Caco-2 (cell line): ENCODE measurements at regions of chr11 and their contacts with region 1.

Region 1: DNA sequence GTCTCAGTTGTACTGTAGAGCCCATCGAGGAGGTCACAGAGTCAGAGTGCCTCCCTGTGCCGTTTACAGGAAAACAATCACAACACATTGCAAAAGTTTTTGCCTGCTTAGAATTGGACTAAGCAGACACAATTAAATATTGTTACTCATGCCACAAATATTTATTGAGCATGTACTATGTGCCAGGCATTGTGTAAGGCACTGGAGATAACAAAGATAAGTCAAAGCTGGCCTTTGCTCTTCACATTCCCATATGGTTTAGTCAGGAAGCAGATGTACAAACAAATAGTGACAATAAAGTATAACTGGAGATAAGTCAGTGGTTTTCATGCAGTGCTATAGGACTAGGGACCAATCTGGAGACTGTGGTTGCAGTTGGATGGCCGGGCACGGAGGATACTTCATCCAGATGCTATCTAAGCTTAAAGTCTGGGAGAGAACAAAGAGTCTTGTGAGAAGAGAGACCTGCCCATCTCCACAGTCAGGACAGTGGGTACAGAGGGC is 550.7 kb downstream of the INSC start:
- DNase-seq: peak; percentile 44
- H3K4me3 ChIP-seq: no peak overlapping the region
- H3K4me3 Mint-ChIP-seq: no peak overlapping the region
- H3K27ac Mint-ChIP-seq: peak overlapping the region; percentile 63
- H3K4me1 ChIP-seq: peaks cover 35% of the 10 kb centered on the region
- H3K4me1 Mint-ChIP-seq: peaks cover 45% of the 10 kb centered on the region
- H3K27me3 ChIP-seq: no peaks in the 10 kb centered on the region
- H3K27me3 Mint-ChIP-seq: no peaks in the 10 kb centered on the region
- CTCF ChIP-seq: no peak

Region 2: GRCh38 chr11:15695096-15695845 is 29.9 kb after region 1 on chr11:
- CTCF ChIA-PET with region 1: no interaction called
- POLR2A ChIA-PET with region 1: no interaction called
- intact Hi-C with region 1: loop called (anchors 1 kb)
- DNase-seq: peak; percentile 56 to 58
- H3K4me3 ChIP-seq: no peak overlapping the region
- H3K4me3 Mint-ChIP-seq: peak overlapping the region; percentile 3
- H3K27ac Mint-ChIP-seq: peak overlapping the region; percentile 27
- H3K4me1 ChIP-seq: peaks cover 26% of the 10 kb centered on the region
- H3K4me1 Mint-ChIP-seq: peaks cover 31% of the 10 kb centered on the region
- H3K27me3 ChIP-seq: no peaks in the 10 kb centered on the region
- H3K27me3 Mint-ChIP-seq: no peaks in the 10 kb centered on the region
- CTCF ChIP-seq: no peak

Region 3: DNA sequence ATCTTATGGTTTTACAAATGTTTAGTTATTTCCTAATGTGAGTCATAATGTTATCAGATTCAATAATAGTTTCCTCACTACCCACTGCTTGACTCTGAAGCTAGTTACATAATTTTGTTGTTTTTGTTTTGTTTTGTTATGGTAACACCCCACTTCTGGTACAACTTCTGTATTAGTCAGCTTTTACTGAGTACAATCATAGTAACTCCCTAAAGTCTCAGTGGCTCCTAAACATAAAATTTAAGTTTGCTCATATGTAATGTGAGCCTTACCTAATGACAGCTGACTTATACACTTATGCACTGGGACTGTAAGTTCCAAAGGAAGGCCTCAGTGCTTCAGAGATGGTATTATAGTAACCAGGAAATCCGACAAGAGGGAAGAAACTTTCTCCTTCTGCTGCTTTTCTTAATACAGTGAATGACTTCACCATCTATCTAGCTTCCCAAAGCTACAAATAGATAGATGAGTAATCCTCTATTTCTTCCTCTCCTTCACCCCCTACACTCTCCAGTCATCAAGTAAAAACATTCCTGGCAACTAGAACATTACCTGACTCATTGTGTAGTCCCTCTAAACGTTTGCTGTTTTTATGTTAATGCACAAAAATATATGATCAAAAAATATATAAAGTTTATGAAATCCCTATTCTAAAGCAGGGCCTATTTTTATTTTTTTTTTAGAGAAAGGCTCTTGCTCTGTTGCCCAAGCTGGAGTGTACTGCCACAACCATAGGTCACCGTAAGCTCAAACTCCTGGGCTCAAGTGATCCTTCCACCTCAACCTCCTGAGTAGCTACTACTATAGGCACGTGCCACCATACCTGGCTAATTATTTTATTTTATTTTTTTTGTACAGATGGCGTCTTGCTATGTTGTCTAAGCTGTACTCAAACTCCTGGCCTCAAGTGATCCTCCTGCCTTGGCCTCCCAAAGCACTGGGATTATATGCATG is 127.9 kb after region 1 on chr11:
- CTCF ChIA-PET with region 1: no interaction called
- POLR2A ChIA-PET with region 1: no interaction called
- intact Hi-C with region 1: no loop called
- DNase-seq: no peak
- H3K4me3 ChIP-seq: no peak overlapping the region
- H3K4me3 Mint-ChIP-seq: no peak overlapping the region
- H3K27ac Mint-ChIP-seq: no peak overlapping the region
- H3K4me1 ChIP-seq: no peaks in the 10 kb centered on the region
- H3K4me1 Mint-ChIP-seq: no peaks in the 10 kb centered on the region
- H3K27me3 ChIP-seq: no peaks in the 10 kb centered on the region
- H3K27me3 Mint-ChIP-seq: no peaks in the 10 kb centered on the region
- CTCF ChIP-seq: no peak